CD4-positive, alpha-beta T cell (primary cell): ENCODE measurements at regions of chr6 and their contacts with region 1.

Region 1: DNA sequence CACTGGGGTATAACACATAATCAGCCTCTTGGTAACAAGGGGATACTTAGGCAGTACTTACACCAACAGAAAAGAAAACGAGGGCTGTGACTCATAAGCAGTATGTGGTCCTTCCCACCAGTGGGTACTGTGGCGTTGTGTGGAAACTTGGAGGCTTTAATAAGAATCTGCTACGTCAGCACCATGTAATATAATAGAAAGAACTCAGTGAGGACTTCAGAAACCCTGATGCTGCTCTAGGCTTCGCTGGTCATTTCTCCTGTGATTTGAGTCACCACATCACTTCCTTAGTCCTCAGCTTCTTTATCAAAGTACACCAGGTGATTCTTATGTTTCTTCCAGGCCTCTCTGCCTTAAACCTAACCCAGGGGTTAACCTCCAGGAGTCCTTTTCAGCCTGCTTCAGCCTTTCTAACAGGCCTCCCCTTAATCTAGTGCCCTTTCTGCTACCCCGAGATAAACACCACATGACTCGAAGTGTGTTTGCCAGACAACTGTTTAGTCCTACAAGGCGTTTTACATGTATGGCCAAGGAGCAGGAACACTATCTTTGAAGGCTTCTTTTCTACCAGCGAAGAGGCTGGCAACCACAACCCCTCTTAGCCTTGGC is 68.5 kb downstream of the FYN start:
- DNase-seq: peak; percentile 38 to 91 (median 54)
- ATAC-seq: peak; percentile 71
- H3K4me3 ChIP-seq: peak overlapping the region; percentile 15
- H3K4me3 Mint-ChIP-seq: peak overlapping the region; percentile 67
- H3K27ac ChIP-seq: peak overlapping the region; percentile 55 to 66
- H3K27ac Mint-ChIP-seq: peak overlapping the region; percentile 91
- H3K4me1 ChIP-seq: peaks cover 77% of the 10 kb centered on the region
- H3K4me1 Mint-ChIP-seq: peaks cover 93% of the 10 kb centered on the region
- H3K27me3 ChIP-seq: no peaks in the 10 kb centered on the region
- H3K27me3 Mint-ChIP-seq: no peaks in the 10 kb centered on the region
- CTCF ChIP-seq: no peak

Region 2: DNA sequence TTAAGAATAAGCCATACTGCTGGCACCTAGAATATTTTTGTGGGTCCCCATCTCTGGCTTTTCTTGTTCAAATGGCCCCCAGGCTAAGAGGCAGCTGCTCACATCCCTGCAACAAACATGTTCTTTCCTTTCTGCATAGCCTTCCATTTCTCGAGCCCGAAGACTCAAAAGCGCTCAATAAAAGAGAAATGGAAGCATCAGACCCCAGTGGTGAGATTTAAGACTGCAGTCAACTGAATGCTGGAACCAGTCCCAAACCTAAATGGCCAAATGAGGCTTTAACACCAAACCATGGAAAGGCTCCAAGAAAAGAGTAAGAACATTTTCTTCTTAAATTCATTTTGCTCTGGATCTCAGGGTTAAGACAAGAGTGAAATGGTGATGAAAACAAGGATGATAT is 76.9 kb before region 1 on chr6:
- CTCF ChIA-PET with region 1: no interaction called
- POLR2A ChIA-PET with region 1: interaction called, 4 read pairs
- intact Hi-C with region 1: loop called in 1 of 2 experiments (anchors 5 kb)
- DNase-seq: peak in 2 of 14 experiments; percentile 50 to 53
- ATAC-seq: no peak
- H3K4me3 ChIP-seq: no peak overlapping the region
- H3K4me3 Mint-ChIP-seq: no peak overlapping the region
- H3K27ac ChIP-seq: no peak overlapping the region
- H3K27ac Mint-ChIP-seq: peak overlapping the region; percentile 93
- H3K4me1 ChIP-seq: peaks cover 74% of the 10 kb centered on the region
- H3K4me1 Mint-ChIP-seq: peaks cover 93% of the 10 kb centered on the region
- H3K27me3 ChIP-seq: no peaks in the 10 kb centered on the region
- H3K27me3 Mint-ChIP-seq: no peaks in the 10 kb centered on the region
- CTCF ChIP-seq: no peak

Region 3: GRCh38 chr6:111793711-111794111 is 11.0 kb before region 1 on chr6:
- CTCF ChIA-PET with region 1: interaction called, 4 read pairs
- POLR2A ChIA-PET with region 1: interaction called, 13 read pairs
- intact Hi-C with region 1: loop called in 1 of 2 experiments (anchors 2 kb)
- DNase-seq: peak in 8 of 14 experiments; percentile 26 to 88 (median 48)
- ATAC-seq: peak; percentile 63
- H3K4me3 ChIP-seq: peak overlapping the region; percentile 39
- H3K4me3 Mint-ChIP-seq: peak overlapping the region; percentile 79
- H3K27ac ChIP-seq: peak overlapping the region; percentile 5 to 61
- H3K27ac Mint-ChIP-seq: peak overlapping the region; percentile 78
- H3K4me1 ChIP-seq: peaks cover 57% of the 10 kb centered on the region
- H3K4me1 Mint-ChIP-seq: peaks cover 77% of the 10 kb centered on the region
- H3K27me3 ChIP-seq: no peaks in the 10 kb centered on the region
- H3K27me3 Mint-ChIP-seq: no peaks in the 10 kb centered on the region
- CTCF ChIP-seq: no peak

Region 4: GRCh38 chr6:111841822-111842221 is 37.1 kb after region 1 on chr6:
- CTCF ChIA-PET with region 1: interaction called, 4 read pairs
- POLR2A ChIA-PET with region 1: interaction called, 12 read pairs
- intact Hi-C with region 1: loop called (anchors 2 kb)
- DNase-seq: peak in 7 of 14 experiments; percentile 35 to 87 (median 63)
- ATAC-seq: peak; percentile 3
- H3K4me3 ChIP-seq: peak overlapping the region; percentile 0
- H3K4me3 Mint-ChIP-seq: no peak overlapping the region
- H3K27ac ChIP-seq: peak overlapping the region; percentile 54 to 67
- H3K27ac Mint-ChIP-seq: no peak overlapping the region
- H3K4me1 ChIP-seq: peaks cover 92% of the 10 kb centered on the region
- H3K4me1 Mint-ChIP-seq: no peaks in the 10 kb centered on the region
- H3K27me3 ChIP-seq: no peaks in the 10 kb centered on the region
- H3K27me3 Mint-ChIP-seq: no peaks in the 10 kb centered on the region
- CTCF ChIP-seq: no peak

Region 5: DNA sequence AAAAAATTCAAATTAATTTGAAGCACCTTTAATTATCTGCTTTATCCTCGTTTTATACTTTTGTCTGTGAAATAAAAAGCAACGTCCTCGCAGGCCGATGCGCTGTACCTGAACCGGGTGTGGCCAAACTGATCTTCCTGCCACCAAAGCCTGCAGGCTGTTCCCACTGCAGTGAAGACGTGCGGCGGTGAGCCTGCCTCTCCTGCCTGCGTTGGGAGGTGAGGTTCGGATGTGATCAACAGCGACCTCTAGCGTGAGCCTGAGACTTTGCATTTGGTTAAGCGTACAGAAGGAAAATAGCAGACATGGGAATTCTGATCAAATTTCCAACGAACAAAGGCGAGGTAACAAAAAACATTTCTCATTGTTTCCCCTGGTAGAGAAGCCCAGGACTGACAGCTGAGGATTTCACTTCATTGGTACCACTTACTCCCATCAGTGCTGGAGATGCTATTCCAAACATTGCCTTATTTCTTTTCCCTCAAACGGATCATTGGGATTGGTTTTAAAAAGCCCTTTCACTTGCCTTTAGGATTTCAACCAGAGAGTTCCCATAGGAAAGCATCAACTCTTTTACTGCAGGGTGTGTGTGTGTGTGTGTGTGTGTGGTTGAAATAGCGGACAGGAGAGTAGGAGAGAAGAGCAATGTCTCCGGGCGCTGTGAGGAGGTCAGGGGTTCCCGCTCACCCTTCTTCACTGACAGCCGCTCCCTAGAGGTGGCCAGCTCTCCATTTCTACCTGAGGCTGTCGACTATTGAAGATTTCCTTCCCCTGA is 192.5 kb after region 1 on chr6:
- CTCF ChIA-PET with region 1: interaction called, 4 read pairs
- POLR2A ChIA-PET with region 1: interaction called, 7 read pairs
- intact Hi-C with region 1: loop called (anchors 1 to 5 kb)
- DNase-seq: peak; percentile 61 to 92 (median 76)
- ATAC-seq: peak; percentile 70
- H3K4me3 ChIP-seq: peak overlapping the region; percentile 8
- H3K4me3 Mint-ChIP-seq: peak overlapping the region; percentile 75
- H3K27ac ChIP-seq: no peak overlapping the region
- H3K27ac Mint-ChIP-seq: peak overlapping the region; percentile 82
- H3K4me1 ChIP-seq: peaks cover 40% of the 10 kb centered on the region
- H3K4me1 Mint-ChIP-seq: peaks cover 55% of the 10 kb centered on the region
- H3K27me3 ChIP-seq: no peaks in the 10 kb centered on the region
- H3K27me3 Mint-ChIP-seq: no peaks in the 10 kb centered on the region
- CTCF ChIP-seq: peak; percentile 93